HCT116 (cell line): ENCODE measurements at regions of chr9 and their contacts with region 1.

Region 1: GRCh38 chr9:133992780-133993634 is 883 bp upstream of the VAV2 start:
- DNase-seq: peak; percentile 43
- ATAC-seq: peak; percentile 70
- H3K4me3 ChIP-seq: peak overlapping the region; percentile 79 to 80
- H3K27ac ChIP-seq: peak overlapping the region; percentile 89
- H3K4me1 ChIP-seq: peaks cover 19 to 40% of the 10 kb centered on the region in 2 experiments
- H3K27me3 ChIP-seq: no peaks in the 10 kb centered on the region
- CTCF ChIP-seq: peak in 2 of 3 experiments; percentile 48 to 50; a peak in 4 of 6 replicates
- POLR2A ChIP-seq: peak; percentile 41
- RAD21 ChIP-seq: no peak

Region 2: DNA sequence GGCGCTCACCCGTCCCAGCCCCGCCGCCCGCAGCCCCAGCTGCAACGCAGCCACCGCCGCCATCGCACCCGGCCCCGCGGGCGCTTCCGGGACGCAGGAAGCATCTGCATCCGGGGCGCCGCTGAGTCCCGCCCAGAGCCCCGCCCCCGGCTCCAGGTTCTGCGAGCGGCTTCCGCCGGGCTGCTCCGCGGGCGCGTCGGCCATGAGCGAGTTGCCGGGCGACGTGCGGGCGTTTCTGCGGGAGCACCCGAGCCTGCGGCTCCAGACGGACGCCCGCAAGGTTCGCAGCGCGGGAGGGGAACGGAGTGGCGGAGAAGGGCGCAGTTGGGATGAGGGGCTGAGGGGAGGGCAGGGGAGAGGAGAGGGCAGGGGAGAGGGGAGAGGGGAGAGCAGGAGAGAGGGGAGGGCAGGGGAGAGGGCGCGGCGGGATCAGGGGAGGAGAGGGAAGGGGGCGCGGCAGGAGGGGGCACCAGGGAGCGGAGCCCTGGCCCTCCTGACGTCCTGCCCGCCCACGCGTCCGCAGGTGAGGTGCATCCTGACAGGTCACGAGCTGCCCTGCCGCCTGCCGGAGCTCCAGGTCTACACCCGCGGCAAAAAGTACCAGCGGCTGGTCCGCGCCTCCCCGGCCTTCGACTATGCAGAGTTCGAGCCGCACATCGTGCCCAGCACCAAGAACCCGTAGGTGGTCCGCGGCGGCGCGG is 636.5 kb before region 1 on chr9 and contains the starts of genes SURF1 and SURF2:
- CTCF ChIA-PET with region 1: no interaction called
- POLR2A ChIA-PET with region 1: no interaction called
- RAD21 ChIA-PET with region 1: no interaction called
- intact Hi-C with region 1: loop called (anchors 10 kb)
- DNase-seq: no peak
- ATAC-seq: peak; percentile 78
- H3K4me3 ChIP-seq: peak within 1 kb of the TSS; percentile 87 to 96
- H3K27ac ChIP-seq: peak within 1 kb of the TSS; percentile 61
- H3K4me1 ChIP-seq: peaks cover 7 to 24% of the 10 kb centered on the region in 2 experiments; a peak in 3 of 4 replicates
- H3K27me3 ChIP-seq: no peaks in the 10 kb centered on the region
- CTCF ChIP-seq: peak in 2 of 3 experiments; percentile 11 to 19; a peak in 1 of 6 replicates
- POLR2A ChIP-seq: peak; percentile 94
- RAD21 ChIP-seq: no peak
- total RNA-seq, gene SURF1: 71.7 TPM
- total RNA-seq, gene SURF2: 27.8 TPM

Region 3: GRCh38 chr9:133726401-133727276 is 266.4 kb before region 1 on chr9:
- CTCF ChIA-PET with region 1: interaction called, 13 read pairs
- POLR2A ChIA-PET with region 1: no interaction called
- RAD21 ChIA-PET with region 1: no interaction called
- intact Hi-C with region 1: loop called (anchors 5 kb)
- DNase-seq: peak; percentile 38
- ATAC-seq: peak; percentile 87
- H3K4me3 ChIP-seq: no peak overlapping the region
- H3K27ac ChIP-seq: no peak overlapping the region
- H3K4me1 ChIP-seq: peaks cover 0 to 5% of the 10 kb centered on the region in 2 experiments; a peak in 2 of 4 replicates
- H3K27me3 ChIP-seq: 0 out of 2 replicates have a peak, but pooled peaks cover 12% of the 10 kb centered on the region
- CTCF ChIP-seq: peak; percentile 61 to 76 (median 74)
- POLR2A ChIP-seq: no peak
- RAD21 ChIP-seq: peak; percentile 86

Region 4: GRCh38 chr9:133782157-133783130 is 210.6 kb before region 1 on chr9:
- CTCF ChIA-PET with region 1: interaction called, 76 read pairs
- POLR2A ChIA-PET with region 1: interaction called, 4 read pairs
- RAD21 ChIA-PET with region 1: interaction called, 10 to 13 read pairs
- intact Hi-C with region 1: loop called (anchors 1 kb)
- DNase-seq: peak; percentile 26
- ATAC-seq: peak; percentile 81
- H3K4me3 ChIP-seq: no peak overlapping the region
- H3K27ac ChIP-seq: no peak overlapping the region
- H3K4me1 ChIP-seq: no peaks in the 10 kb centered on the region
- H3K27me3 ChIP-seq: no peaks in the 10 kb centered on the region
- CTCF ChIP-seq: peak; percentile 75 to 88 (median 87); a peak in 5 of 6 replicates
- POLR2A ChIP-seq: no peak
- RAD21 ChIP-seq: peak; percentile 70

Region 5: DNA sequence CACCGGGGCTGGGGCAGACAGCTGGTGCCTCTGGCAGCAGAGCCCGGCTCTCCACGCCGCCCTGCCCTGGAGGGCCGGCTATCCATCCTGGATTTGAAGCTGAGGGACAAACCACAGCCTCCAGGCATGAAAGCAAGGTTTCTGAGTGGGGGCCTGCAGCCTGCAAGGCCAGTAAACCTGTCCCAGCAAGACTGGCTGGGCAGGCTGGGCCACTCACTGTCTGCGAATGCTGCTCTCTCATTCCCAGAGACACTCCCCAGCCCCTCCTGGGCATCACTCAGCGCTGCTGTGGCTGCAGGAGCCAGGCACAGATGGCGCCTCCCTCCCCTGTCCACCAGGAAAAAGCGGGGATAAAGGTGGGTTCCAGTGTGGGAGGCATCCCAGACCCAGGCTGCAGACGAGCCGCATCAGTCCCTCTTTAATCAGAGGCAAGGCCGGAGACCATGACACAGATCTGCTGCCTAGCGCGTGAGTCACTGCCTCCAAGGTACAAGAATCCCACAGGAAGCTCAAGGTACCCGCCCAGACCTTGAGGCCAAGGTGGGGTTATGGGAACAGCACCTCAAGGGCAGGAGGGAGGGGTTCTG is 118.9 kb before region 1 on chr9:
- CTCF ChIA-PET with region 1: interaction called, 5 read pairs
- POLR2A ChIA-PET with region 1: no interaction called
- RAD21 ChIA-PET with region 1: no interaction called
- intact Hi-C with region 1: loop called (anchors 2 kb)
- DNase-seq: peak; percentile 73
- ATAC-seq: peak; percentile 89
- H3K4me3 ChIP-seq: peak overlapping the region; percentile 9 to 41; a peak in 3 of 4 replicates
- H3K27ac ChIP-seq: peak overlapping the region; percentile 76
- H3K4me1 ChIP-seq: peaks cover 35 to 46% of the 10 kb centered on the region in 2 experiments
- H3K27me3 ChIP-seq: no peaks in the 10 kb centered on the region
- CTCF ChIP-seq: no peak
- POLR2A ChIP-seq: no peak
- RAD21 ChIP-seq: no peak; the same call in 1 of the 2 replicates

Region 6: GRCh38 chr9:134099123-134099787 is 106.2 kb after region 1 on chr9:
- CTCF ChIA-PET with region 1: interaction called, 4 read pairs
- POLR2A ChIA-PET with region 1: no interaction called
- RAD21 ChIA-PET with region 1: no interaction called
- intact Hi-C with region 1: loop called (anchors 1 kb)
- DNase-seq: peak; percentile 49
- ATAC-seq: peak; percentile 94
- H3K4me3 ChIP-seq: no peak overlapping the region
- H3K27ac ChIP-seq: no peak overlapping the region
- H3K4me1 ChIP-seq: no peaks in the 10 kb centered on the region
- H3K27me3 ChIP-seq: peaks cover 14% of the 10 kb centered on the region
- CTCF ChIP-seq: peak; percentile 87 to 92 (median 88); a peak in 5 of 6 replicates
- POLR2A ChIP-seq: no peak
- RAD21 ChIP-seq: peak; percentile 91